Dendritic cell treated with granulocyte-macrophage colony-stimulating factor and Interleukin-4, amounts not matched to agents 40 ng/mL and 50 ng/mL, for 4 days (primary cell): ENCODE measurements at regions of chr1 and their contacts with region 1.

Region 1: DNA sequence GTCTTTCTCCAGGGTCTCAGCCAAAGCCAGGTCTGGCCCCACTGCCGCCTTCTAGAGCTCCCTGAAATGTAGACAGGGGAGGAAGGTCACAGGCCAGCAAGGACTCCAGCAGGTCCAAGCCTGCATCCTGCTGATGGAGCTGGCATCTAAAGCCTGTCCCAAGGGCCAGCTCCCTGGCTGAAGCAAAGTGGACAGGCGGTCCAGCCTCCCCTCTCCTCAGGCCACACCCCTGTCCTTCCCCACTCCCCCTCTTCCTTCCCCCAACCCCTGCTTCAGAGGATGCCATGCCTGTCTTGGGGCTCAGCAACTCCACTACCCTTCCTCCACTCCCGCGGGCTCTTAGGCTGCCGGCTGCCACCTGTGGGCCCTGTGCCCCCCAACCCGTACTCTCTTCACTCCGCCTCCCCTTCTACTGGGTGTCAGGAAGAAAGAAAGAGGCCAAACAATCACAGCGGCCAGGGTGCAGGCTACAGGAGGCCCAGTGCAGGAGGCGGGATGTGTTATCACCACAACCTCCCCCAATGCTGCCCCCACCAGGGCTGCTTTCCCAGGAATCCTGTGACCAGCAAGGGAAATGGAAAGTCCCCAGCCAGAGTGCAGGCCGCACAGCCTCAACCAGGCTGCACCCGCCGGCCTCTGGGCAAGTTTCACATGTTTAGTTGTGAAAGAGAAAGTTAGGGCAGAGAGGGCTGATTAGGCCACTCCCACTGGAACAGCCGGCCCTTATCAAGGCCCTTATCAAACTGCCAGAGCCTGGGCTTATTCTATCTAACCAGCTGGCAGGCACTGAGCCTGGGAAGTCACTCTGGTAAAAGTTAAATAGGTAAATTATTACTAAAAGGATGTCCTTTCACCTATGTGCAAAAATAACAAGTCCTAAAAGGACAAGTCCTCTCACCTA is 34.1 kb downstream of the ACOT7 start:
- H3K4me3 Mint-ChIP-seq: peak overlapping the region; percentile 55
- H3K27ac Mint-ChIP-seq: peak overlapping the region; percentile 94
- H3K4me1 Mint-ChIP-seq: peaks cover 46% of the 10 kb centered on the region
- H3K27me3 Mint-ChIP-seq: no peaks in the 10 kb centered on the region

Region 2: DNA sequence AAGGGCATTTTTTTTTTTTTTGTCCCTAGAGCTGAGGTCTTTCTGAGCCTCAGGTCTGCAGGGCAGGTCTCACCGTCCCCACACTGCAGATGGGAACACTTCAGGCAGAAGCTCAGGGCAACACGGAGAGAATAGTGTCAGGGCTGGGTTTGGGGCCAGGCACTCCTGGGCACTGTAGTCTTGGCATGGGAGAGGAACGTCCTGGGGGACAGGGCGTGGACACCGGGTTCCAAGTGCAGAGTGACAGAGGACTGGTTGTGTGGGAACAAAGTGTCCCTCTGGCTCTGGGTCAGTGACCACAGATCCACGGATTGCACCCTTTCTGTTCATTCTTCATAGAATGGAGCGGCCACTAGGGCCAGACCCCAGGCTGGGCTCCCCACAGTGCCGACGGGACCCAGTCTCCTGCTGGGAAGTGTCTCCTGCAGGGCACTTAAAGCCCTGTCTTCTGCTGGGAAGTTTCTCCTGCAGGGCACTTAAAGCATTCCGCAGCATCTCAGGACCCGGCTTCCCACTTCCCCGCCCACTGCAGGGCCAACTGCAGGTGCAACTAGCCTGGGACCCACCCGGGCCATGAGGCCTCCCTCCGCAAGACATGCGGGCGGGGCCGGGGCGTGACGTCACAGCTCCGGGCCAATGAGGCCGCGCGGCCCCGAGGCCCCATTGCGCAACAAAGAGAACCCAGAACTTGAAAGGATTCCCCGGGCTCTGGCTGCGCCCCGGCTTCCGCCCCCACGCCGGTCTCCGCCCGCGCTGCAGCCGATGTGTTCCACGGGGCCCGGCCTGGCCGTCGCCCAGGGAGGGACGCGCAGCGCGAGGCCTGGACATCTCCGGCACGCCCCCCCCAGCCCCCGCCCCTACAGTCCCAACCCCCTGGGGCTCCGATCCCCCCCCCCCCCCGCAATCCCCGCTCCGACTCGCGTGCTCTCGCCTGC is 99.7 kb before region 1 on chr1:
- intact Hi-C with region 1: no loop called
- H3K4me3 Mint-ChIP-seq: peak overlapping the region; percentile 63
- H3K27ac Mint-ChIP-seq: no peak overlapping the region
- H3K4me1 Mint-ChIP-seq: peaks cover 32% of the 10 kb centered on the region
- H3K27me3 Mint-ChIP-seq: peaks cover 57% of the 10 kb centered on the region

Region 3: DNA sequence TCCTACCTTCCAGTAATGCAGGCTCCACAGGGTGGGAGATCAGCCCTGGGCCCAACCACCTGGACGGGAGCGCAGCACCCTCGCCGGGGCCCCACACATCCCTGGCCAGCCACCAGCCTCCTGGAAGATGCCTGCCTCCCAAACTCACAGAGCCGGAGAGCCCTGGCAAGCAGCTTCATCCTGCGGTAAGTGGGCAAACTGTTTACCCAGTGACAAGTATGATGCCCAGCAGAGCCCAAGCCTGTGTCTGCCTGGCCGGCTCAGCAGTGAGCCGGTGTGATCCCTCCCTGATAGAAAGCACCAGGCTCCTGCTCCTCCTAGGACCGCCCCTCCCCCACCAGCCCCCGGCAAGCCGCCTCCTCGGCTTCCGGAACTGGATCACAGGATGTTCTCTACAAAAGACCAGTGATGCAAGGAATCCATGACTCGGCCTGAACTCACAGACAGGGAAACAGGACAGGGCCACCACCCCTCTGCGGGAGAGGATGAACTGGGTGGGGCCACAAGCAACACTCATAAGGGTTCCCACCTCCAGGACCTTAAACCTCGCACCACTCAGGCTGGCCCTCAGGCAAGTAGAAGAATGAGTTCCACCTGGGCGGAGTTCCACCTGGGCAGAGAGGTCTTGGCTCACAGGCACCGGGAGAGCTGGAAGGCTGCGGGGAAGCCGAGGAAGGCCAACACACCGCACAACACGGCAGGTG is 26.2 kb after region 1 on chr1:
- intact Hi-C with region 1: no loop called
- H3K4me3 Mint-ChIP-seq: no peak overlapping the region
- H3K27ac Mint-ChIP-seq: peak overlapping the region; percentile 25
- H3K4me1 Mint-ChIP-seq: peaks cover 6% of the 10 kb centered on the region
- H3K27me3 Mint-ChIP-seq: no peaks in the 10 kb centered on the region

Region 4: GRCh38 chr1:6401673-6402072 is 42.2 kb after region 1 on chr1:
- intact Hi-C with region 1: loop called (anchors 2 kb)
- H3K4me3 Mint-ChIP-seq: no peak overlapping the region
- H3K27ac Mint-ChIP-seq: peak overlapping the region; percentile 63
- H3K4me1 Mint-ChIP-seq: peaks cover 15% of the 10 kb centered on the region
- H3K27me3 Mint-ChIP-seq: peaks cover 33% of the 10 kb centered on the region